ENCODE measurements at regions of chr15 and their contacts with region 1.

Region 1: DNA sequence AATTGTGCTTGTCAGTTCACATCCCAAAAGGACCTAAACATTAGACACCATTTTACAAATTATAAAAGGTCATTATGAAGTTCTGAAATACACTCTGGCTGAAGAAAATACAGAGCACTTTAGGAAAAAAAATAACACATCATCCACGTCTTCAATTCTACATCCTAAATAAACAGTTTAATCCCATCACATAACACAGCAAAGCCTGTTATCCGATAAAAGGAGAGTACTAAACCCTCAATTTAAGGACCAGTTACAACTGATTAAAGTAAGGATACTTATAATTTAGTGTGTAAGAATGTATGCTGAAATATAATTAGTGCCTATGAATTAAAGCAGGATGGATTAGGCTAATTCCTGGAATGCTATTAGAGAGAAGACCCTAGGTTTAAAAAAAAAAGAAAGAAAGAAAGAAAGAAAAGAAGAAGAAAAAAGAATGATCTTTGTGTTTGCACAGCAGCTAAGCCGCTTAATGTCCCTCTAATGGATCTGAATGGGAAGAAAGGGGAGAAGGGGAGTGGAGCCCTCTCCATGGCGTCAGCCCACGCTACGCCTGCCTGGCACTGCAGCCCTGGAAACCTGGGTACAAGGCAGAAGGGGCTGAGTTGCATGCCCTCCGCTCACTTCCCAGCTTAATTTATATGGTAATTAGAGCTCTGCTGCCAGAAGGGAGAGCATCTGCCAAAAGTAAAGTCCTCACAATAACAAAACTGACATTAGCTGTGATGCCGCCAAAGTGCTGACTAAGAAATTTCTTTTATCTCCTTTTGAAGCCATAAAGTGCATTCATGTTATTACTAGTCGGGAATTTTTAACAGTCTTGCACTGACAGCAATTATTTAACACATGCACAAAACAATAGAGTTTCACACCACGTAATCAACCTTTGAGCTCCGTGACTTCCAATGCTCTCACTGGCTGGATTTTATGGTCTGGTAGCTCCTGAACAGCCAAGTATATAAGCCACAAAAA is 90.0 kb downstream of the FSIP1 start:
- DNase-seq: no peak
- ATAC-seq: no peak
- H3K4me3 ChIP-seq: no peak overlapping the region
- H3K27ac ChIP-seq: no peak overlapping the region
- H3K4me1 ChIP-seq: peaks cover 5 to 6% of the 10 kb centered on the region in 2 experiments; a peak in 4 of 5 replicates
- H3K27me3 ChIP-seq: no peaks in the 10 kb centered on the region
- CTCF ChIP-seq: no peak
- EP300 ChIP-seq: no peak
- POLR2A ChIP-seq: no peak
- RAD21 ChIP-seq: no peak

Region 2: GRCh38 chr15:39736412-39737197 is 44.0 kb after region 1 on chr15:
- CTCF ChIA-PET with region 1: no interaction called
- POLR2A ChIA-PET with region 1: no interaction called
- in situ Hi-C with region 1: no loop called
- intact Hi-C with region 1: loop called (anchors 5 kb)
- DNase-seq: no peak
- ATAC-seq: peak; percentile 59
- H3K4me3 ChIP-seq: no peak overlapping the region
- H3K27ac ChIP-seq: no peak overlapping the region
- H3K4me1 ChIP-seq: no peaks in the 10 kb centered on the region; a peak in 2 of 5 replicates
- H3K27me3 ChIP-seq: no peaks in the 10 kb centered on the region
- CTCF ChIP-seq: no peak
- EP300 ChIP-seq: no peak
- POLR2A ChIP-seq: no peak
- RAD21 ChIP-seq: no peak

Measured in K562 (cell line).